Endothelial cell of umbilical vein (primary cell): ENCODE measurements at regions of chr1 and their contacts with region 1.

Region 1: GRCh38 chr1:16187748-16188401 is 24.6 kb downstream of the ARHGEF19 start:
- DNase-seq: peak; percentile 85
- H3K4me3 ChIP-seq: no peak overlapping the region
- H3K27ac ChIP-seq: no peak overlapping the region
- H3K4me1 ChIP-seq: peaks cover 5% of the 10 kb centered on the region
- H3K27me3 ChIP-seq: no peaks in the 10 kb centered on the region
- CTCF ChIP-seq: peak; percentile 93 to 95
- POLR2A ChIP-seq: no peak

Region 2: GRCh38 chr1:15825800-15826199 is 362.1 kb before region 1 on chr1:
- CTCF ChIA-PET with region 1: no interaction called
- POLR2A ChIA-PET with region 1: no interaction called
- dilution Hi-C with region 1: no loop called
- intact Hi-C with region 1: no loop called
- DNase-seq: no peak
- H3K4me3 ChIP-seq: no peak overlapping the region
- H3K27ac ChIP-seq: no peak overlapping the region
- H3K4me1 ChIP-seq: no peaks in the 10 kb centered on the region
- H3K27me3 ChIP-seq: no peaks in the 10 kb centered on the region
- CTCF ChIP-seq: no peak
- POLR2A ChIP-seq: no peak

Region 3: DNA sequence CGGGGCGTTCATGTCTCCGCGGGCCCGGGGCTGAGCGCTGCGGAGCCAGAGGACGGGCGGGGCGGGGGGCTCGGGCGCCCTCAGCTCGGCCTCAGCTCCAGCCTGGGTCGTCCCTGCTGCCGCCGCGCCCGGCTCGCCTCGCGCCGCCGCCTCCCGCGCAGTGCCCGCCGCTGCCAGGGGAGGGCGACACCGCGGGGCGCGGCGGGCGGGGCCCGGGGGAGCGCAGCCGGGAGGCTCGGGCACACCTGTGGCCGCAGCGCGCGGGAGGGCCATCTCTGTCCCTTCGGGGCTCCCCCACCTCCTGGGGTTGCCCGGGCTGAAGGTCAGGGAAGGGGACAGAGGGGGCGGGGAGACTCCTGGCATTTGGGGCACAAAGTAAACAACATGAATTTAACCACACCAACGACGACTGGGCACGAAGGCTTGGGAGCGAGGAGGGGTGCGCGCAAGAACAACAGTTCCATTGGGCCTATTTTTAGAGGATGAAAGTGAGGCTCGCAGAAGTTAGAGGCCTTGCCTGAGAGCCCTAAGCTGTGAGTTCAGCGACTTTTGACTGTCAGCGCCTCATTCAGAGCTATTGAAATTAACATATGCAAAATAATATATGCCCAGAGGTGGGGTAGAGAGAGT is 114.3 kb before region 1 on chr1 and contains the start of gene FAM131C:
- CTCF ChIA-PET with region 1: interaction called, 353 read pairs
- POLR2A ChIA-PET with region 1: interaction called, 6 read pairs
- dilution Hi-C with region 1: no loop called
- intact Hi-C with region 1: loop called (anchors 2 kb)
- DNase-seq: no peak
- H3K4me3 ChIP-seq: peak within 1 kb of the TSS; percentile 23 to 37 (median 25)
- H3K27ac ChIP-seq: no peak within 1 kb of the TSS
- H3K4me1 ChIP-seq: peaks cover 13% of the 10 kb centered on the region
- H3K27me3 ChIP-seq: no peaks in the 10 kb centered on the region
- CTCF ChIP-seq: peak; percentile 8 to 51
- POLR2A ChIP-seq: no peak
- total RNA-seq, gene FAM131C: 0.44 TPM in 1 of 2 replicates, not detected in the other

Region 4: DNA sequence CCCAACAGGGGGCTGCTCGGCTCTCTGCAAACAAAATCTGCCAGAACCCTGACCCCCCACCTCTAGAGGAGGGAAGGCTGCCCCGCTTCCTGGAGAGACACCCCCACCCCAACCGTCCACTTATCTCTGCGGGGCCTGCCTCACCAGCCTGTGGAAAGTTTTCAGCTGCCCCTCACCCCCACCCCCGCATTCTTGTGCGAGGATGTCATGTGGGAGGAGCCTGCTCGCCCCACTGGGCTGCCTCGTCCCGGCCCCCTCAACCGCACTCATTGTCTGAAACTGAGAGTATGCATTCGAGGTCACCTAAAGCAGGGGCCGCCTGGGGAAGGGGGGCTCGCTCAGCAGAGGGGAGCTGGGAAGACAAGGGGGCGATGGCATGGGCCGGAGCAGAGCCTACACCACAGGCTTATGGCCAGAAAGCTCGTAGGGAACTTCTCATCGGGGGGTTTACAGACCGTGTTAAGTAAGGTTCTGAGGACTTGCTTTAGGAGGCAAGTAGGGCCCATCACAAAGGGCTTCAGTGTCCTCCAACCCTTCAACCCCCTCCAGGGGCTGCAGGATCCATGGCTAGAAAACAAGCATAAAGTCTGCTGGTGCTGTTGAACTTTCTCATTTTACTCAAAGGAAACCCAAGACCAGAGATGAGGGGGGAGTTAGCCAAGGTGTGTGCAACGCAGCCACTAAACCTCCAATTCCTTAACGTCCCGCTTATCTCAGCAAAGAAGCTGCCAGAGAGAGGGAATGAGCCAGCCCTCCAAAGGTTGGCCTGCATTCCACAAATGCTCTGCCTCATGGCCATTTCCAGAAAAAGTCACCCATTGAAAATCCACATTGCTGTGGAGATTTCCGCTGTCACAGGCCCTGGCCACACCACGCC is 41.4 kb before region 1 on chr1:
- CTCF ChIA-PET with region 1: interaction called, 79 read pairs
- POLR2A ChIA-PET with region 1: no interaction called
- dilution Hi-C with region 1: no loop called
- intact Hi-C with region 1: loop called (anchors 1 kb)
- DNase-seq: peak; percentile 93
- H3K4me3 ChIP-seq: peak overlapping the region in 2 of 3 experiments; percentile 14 to 23
- H3K27ac ChIP-seq: peak overlapping the region; percentile 99
- H3K4me1 ChIP-seq: peaks cover 97% of the 10 kb centered on the region
- H3K27me3 ChIP-seq: no peaks in the 10 kb centered on the region
- CTCF ChIP-seq: no peak
- POLR2A ChIP-seq: peak; percentile 55

Region 5: GRCh38 chr1:16155532-16156410 is 32.1 kb before region 1 on chr1 and contains the start of gene EPHA2:
- CTCF ChIA-PET with region 1: interaction called, 79 read pairs
- POLR2A ChIA-PET with region 1: interaction called, 6 read pairs
- dilution Hi-C with region 1: no loop called
- intact Hi-C with region 1: loop called (anchors 1 kb)
- DNase-seq: peak; percentile 90
- H3K4me3 ChIP-seq: peak within 1 kb of the TSS; percentile 65 to 88 (median 87)
- H3K27ac ChIP-seq: peak within 1 kb of the TSS; percentile 84
- H3K4me1 ChIP-seq: peaks cover 42% of the 10 kb centered on the region
- H3K27me3 ChIP-seq: no peaks in the 10 kb centered on the region
- CTCF ChIP-seq: no peak
- POLR2A ChIP-seq: peak; percentile 99
- total RNA-seq, gene EPHA2: 125 and 141 TPM in 2 replicates

Region 6: DNA sequence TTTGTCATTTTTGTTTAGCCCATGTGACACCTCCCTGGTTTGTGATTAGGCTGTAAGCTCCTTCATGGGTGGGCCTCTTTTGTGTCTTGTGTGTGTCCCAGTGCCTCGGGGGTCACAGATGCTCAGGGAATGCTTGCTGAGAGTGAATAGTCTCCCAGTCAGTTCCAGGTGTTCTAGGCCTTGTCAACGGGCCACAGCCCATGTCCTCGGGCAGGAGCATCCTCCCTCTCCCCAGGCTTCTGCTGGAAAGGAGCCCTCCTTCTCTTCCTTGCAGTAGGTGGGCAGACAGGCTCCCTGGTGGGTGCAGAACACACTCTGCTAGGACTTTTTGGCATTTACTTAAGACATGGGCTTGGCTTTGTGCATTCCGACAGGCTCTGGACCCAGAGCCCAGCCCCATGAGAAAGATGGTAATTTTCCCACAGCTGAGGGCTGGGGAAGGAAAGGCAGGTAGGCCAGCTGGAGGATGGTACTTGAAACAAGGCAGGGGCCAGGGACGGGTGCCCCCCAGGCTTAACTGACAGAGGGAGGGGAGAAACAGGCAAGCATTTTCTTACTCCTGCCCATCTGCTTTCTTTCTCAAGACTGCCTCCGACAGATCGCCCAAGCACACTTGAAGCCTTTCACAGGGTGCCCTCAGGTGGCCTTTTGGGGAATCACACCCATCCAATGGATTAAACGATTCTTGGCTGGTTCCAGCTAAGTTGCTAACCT is 56.2 kb after region 1 on chr1:
- CTCF ChIA-PET with region 1: interaction called, 9 read pairs
- POLR2A ChIA-PET with region 1: no interaction called
- dilution Hi-C with region 1: no loop called
- intact Hi-C with region 1: loop called (anchors 1 kb)
- DNase-seq: peak; percentile 87
- H3K4me3 ChIP-seq: no peak overlapping the region
- H3K27ac ChIP-seq: no peak overlapping the region
- H3K4me1 ChIP-seq: peaks cover 17% of the 10 kb centered on the region
- H3K27me3 ChIP-seq: no peaks in the 10 kb centered on the region
- CTCF ChIP-seq: peak; percentile 83 to 85
- POLR2A ChIP-seq: no peak